Activated CD4-positive, alpha-beta T cell treated with anti-CD3 and anti-CD28 coated beads for 36 hours (primary cell): ENCODE measurements at regions of chr6 and their contacts with region 1.

Region 1: GRCh38 chr6:32984605-32985389 is 16.4 kb downstream of the BRD2 start:
- DNase-seq: peak; percentile 96
- ATAC-seq: peak; percentile 88
- H3K4me3 Mint-ChIP-seq: no peak overlapping the region
- H3K27ac Mint-ChIP-seq: peak overlapping the region; percentile 44
- H3K4me1 Mint-ChIP-seq: peaks cover 15% of the 10 kb centered on the region
- H3K27me3 Mint-ChIP-seq: no peaks in the 10 kb centered on the region

Region 2: GRCh38 chr6:32838114-32838958 is 146.5 kb before region 1 on chr6 and contains the start of gene TAP2:
- CTCF ChIA-PET with region 1: interaction called, 31 read pairs
- POLR2A ChIA-PET with region 1: interaction called, 3 read pairs
- intact Hi-C with region 1: no loop called
- DNase-seq: peak; percentile 99
- ATAC-seq: peak; percentile 82
- H3K4me3 Mint-ChIP-seq: peak within 1 kb of the TSS; percentile 95
- H3K27ac Mint-ChIP-seq: peak within 1 kb of the TSS; percentile 94
- H3K4me1 Mint-ChIP-seq: peaks cover 79% of the 10 kb centered on the region
- H3K27me3 Mint-ChIP-seq: no peaks in the 10 kb centered on the region
- total RNA-seq, gene TAP2: 96.4 to 150 TPM

Region 3: DNA sequence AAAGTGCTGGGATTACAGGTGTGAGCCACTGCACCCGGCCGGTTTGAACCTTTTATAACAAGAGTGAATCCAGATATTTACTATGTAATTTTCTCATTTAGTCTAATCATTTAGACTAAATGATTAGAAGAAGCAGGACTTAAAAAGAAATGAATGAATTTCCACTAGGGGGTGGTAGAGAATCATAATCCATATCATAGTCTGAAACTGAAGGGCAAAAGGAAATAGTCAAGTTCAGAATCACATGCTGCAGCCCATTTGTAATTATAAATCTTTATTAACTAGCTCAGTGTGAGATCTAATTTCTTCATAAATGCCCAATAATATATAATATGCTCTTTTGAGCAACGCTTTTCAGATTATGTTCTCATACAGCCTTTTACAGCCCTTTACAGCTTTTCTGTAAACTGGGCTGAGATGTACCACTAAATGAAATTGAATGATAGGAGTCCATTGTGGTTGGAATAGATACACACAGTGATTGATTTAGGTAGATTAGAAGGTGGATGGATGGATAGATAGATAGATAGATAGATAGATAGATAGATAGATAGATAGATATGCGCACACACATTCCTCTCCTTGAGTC is 99.0 kb before region 1 on chr6:
- CTCF ChIA-PET with region 1: interaction called, 115 read pairs
- POLR2A ChIA-PET with region 1: no interaction called
- intact Hi-C with region 1: loop called (anchors 1 kb)
- DNase-seq: no peak
- ATAC-seq: peak; percentile 55
- H3K4me3 Mint-ChIP-seq: no peak overlapping the region
- H3K27ac Mint-ChIP-seq: no peak overlapping the region
- H3K4me1 Mint-ChIP-seq: peaks cover 10% of the 10 kb centered on the region
- H3K27me3 Mint-ChIP-seq: no peaks in the 10 kb centered on the region

Region 4: DNA sequence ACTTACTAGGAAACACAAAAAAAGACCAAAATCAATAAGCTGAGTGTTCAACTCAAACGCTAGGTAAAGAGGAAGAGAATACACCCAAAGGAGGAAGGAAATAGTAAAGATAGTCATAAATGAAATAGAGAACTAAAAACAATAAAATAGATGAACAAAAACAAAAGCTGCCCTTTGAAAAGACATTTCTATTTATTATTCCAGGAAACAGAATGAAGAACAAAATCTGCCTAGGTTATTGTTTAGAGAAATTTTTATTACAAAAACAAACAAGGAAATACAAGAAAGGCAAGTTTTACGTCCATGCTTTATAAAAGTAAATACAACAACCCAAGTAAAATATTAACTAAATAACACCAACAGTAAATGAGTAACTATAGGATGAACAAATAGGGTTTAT is 64.1 kb before region 1 on chr6:
- CTCF ChIA-PET with region 1: interaction called, 17 read pairs
- POLR2A ChIA-PET with region 1: no interaction called
- intact Hi-C with region 1: no loop called
- DNase-seq: no peak
- ATAC-seq: no peak
- H3K4me3 Mint-ChIP-seq: no peak overlapping the region
- H3K27ac Mint-ChIP-seq: no peak overlapping the region
- H3K4me1 Mint-ChIP-seq: no peaks in the 10 kb centered on the region
- H3K27me3 Mint-ChIP-seq: peaks cover 2% of the 10 kb centered on the region

Region 5: GRCh38 chr6:32940656-32941213 is 44.1 kb before region 1 on chr6 and contains the start of gene HLA-DMB:
- CTCF ChIA-PET with region 1: interaction called, 87 read pairs
- POLR2A ChIA-PET with region 1: interaction called, 8 read pairs
- intact Hi-C with region 1: no loop called
- DNase-seq: peak; percentile 58
- ATAC-seq: peak; percentile 87
- H3K4me3 Mint-ChIP-seq: peak within 1 kb of the TSS; percentile 72
- H3K27ac Mint-ChIP-seq: peak within 1 kb of the TSS; percentile 87
- H3K4me1 Mint-ChIP-seq: peaks cover 55% of the 10 kb centered on the region
- H3K27me3 Mint-ChIP-seq: no peaks in the 10 kb centered on the region
- total RNA-seq, gene HLA-DMB: 1.9 to 2.3 TPM

Region 6: GRCh38 chr6:32952817-32953739 is 31.7 kb before region 1 on chr6 and contains the start of gene HLA-DMA:
- CTCF ChIA-PET with region 1: interaction called, 99 read pairs
- POLR2A ChIA-PET with region 1: interaction called, 8 read pairs
- intact Hi-C with region 1: loop called (anchors 2 kb)
- DNase-seq: peak; percentile 81
- ATAC-seq: peak; percentile 97
- H3K4me3 Mint-ChIP-seq: peak within 1 kb of the TSS; percentile 68
- H3K27ac Mint-ChIP-seq: peak within 1 kb of the TSS; percentile 76
- H3K4me1 Mint-ChIP-seq: peaks cover 56% of the 10 kb centered on the region
- H3K27me3 Mint-ChIP-seq: no peaks in the 10 kb centered on the region
- total RNA-seq, gene HLA-DMA: 11.8 TPM

Region 7: DNA sequence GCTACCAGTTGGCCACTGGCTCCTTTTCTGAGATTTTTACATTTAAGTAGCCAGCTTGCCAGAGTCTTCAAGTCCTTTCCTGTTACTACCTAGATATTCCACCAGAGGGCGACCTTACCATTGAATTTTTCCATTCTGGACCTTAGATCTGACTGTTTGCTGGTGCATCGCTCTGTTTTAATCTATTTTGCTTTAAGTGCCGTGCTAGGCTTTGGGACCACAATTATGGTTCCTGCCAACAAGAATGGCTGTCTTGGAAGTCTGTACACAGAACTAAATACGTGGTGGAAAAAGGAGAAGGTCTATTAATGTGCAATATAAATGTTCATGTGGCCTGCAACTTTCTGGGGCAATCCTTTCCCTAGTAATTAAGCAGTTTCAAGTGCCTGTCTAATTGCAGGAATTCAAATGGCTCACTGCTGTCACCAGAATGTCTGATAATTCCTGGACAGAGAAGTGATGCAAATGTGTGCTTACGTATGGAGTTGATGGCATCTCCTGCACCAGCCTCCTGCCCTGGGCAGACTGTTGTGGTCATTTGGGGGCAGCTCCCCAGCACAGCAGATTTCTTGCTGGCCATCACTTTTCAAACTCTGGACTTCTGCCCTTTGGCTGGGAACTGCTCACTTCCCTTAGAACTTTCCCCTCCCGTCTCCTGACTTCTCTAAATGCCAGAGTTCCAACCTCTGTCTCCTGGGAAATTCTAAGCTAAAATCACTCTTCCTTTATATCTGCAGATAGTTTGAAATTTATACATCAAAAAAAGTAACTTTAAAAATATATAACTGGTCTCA is 30.2 kb after region 1 on chr6:
- CTCF ChIA-PET with region 1: interaction called, 28 read pairs
- POLR2A ChIA-PET with region 1: no interaction called
- intact Hi-C with region 1: no loop called
- DNase-seq: peak; percentile 53
- ATAC-seq: peak; percentile 81
- H3K4me3 Mint-ChIP-seq: no peak overlapping the region
- H3K27ac Mint-ChIP-seq: no peak overlapping the region
- H3K4me1 Mint-ChIP-seq: peaks cover 23% of the 10 kb centered on the region
- H3K27me3 Mint-ChIP-seq: no peaks in the 10 kb centered on the region